ENCODE measurements at regions of chr12 and their contacts with region 1.

Region 1: GRCh38 chr12:122471324-122472226 is 29.2 kb downstream of the ZCCHC8 start:
- DNase-seq: no peak
- H3K4me3 ChIP-seq: no peak overlapping the region
- CTCF ChIP-seq: peak in 1 of 3 donors; percentile 12
- POLR2A ChIP-seq: no peak

Region 2: DNA sequence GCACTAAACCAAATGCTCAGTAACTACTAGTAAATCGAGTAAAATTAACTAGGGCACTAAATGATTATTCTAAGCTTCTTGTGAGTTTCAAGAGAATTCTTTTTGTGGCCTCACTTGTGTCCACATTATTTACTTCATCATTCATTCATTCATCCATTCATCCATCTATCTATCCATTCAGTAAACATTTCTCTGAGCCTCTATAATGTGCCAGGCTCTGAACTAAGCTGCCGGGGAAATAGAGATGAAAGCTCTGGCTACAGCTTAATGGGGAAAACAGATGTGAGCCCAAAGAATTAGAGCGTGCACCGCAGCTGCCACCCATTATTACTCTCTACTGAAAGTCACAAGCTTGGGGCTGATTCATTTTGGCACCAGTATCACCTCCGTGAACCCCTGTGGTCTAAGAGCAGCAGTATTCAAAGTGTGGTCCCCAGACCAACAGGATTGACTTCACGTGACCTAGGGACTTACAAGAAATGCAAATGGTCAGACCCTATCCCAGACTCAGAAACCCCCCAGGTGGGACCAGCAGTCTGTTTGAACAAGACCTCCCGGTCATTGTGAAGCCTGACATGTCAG is 480.5 kb before region 1 on chr12:
- intact Hi-C with region 1: no loop called
- DNase-seq: no peak
- H3K4me3 ChIP-seq: no peak overlapping the region
- CTCF ChIP-seq: no peak
- POLR2A ChIP-seq: no peak

Region 3: GRCh38 chr12:122399592-122400373 is 71.8 kb before region 1 on chr12:
- intact Hi-C with region 1: loop called (anchors 10 kb)
- DNase-seq: peak; percentile 80 to 90
- H3K4me3 ChIP-seq: no peak overlapping the region
- CTCF ChIP-seq: peak in 1 of 3 donors; percentile 43
- POLR2A ChIP-seq: no peak